ENCODE measurements at regions of chr19 and their contacts with region 1.

Region 1: GRCh38 chr19:45423589-45424190 is at the start of gene ERCC1:
- DNase-seq: peak; percentile 76 to 89
- ATAC-seq: peak; percentile 73 to 78
- H3K4me3 ChIP-seq: peak within 1 kb of the TSS; percentile 65 to 89 (median 78)
- H3K27ac ChIP-seq: peak within 1 kb of the TSS; percentile 86 to 96 (median 92)
- H3K4me1 ChIP-seq: peaks cover 25 to 31% of the 10 kb centered on the region in 2 donors
- H3K27me3 ChIP-seq: no peaks in the 10 kb centered on the region
- CTCF ChIP-seq: no peak
- POLR2A ChIP-seq: peak; percentile 63 to 76
- total RNA-seq, gene ERCC1: 92.1 to 185 (median 103) TPM

Region 2: GRCh38 chr19:45306518-45307027 is 117.1 kb before region 1 on chr19:
- in situ Hi-C with region 1: no loop called
- intact Hi-C with region 1: loop called (anchors 5 kb)
- DNase-seq: peak in 1 of 2 donors; percentile 70
- ATAC-seq: peak in 1 of 2 donors; percentile 8
- H3K4me3 ChIP-seq: no peak overlapping the region
- H3K27ac ChIP-seq: peak overlapping the region; percentile 76 to 100 (median 98)
- H3K4me1 ChIP-seq: peaks cover 20 to 21% of the 10 kb centered on the region in 2 donors
- H3K27me3 ChIP-seq: no peaks in the 10 kb centered on the region
- CTCF ChIP-seq: no peak
- POLR2A ChIP-seq: no peak

Region 3: DNA sequence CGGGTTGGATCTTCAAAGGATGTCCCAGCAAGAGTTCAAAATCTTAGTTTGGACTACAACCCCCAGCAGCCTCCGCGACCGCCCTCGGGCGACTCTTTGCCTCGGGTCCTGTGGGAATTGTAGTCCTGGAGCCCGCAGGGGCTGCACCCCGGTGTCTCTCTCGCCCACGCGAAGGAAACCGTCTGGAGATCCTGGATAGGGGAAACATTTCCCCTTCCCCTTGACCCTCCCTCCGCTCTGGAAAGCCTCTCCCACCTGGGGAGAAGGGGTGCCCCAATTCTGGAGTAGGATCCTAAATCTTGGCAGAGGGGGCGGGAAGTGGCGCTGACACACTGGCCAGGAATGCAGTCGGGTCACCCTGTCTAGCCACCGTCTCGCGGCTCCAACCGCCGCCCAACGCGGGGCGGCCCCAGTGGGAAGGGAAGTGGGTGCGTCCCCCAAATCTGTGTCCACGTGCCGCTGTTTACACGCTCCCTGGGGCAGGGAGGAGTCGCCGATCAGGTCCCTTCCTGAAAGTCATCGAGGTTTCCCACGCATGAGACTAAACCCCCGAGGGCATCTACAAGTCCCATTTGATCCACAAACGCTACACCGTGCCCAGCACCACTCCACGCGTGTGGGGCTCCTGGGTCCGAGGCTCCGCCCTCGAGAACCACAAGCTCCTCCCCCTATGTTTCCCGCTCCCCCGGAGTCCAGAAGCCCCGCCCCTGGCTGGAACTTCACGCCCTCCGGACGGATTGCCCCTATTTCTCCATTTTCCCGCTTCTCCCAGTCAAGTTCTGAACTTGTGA is 18.1 kb before region 1 on chr19:
- in situ Hi-C with region 1: no loop called
- intact Hi-C with region 1: loop called (anchors 2 kb)
- DNase-seq: peak; percentile 82 to 85
- ATAC-seq: peak; percentile 76 to 78
- H3K4me3 ChIP-seq: peak overlapping the region; percentile 58 to 94 (median 80)
- H3K27ac ChIP-seq: peak overlapping the region; percentile 88 to 96 (median 92)
- H3K4me1 ChIP-seq: peaks cover 22 to 23% of the 10 kb centered on the region in 2 donors
- H3K27me3 ChIP-seq: peaks cover 5 to 10% (median 9%) of the 10 kb centered on the region in 3 donors
- CTCF ChIP-seq: no peak
- POLR2A ChIP-seq: peak in 1 of 2 donors; percentile 22

Region 4: GRCh38 chr19:45439569-45440254 is 16.0 kb after region 1 on chr19:
- in situ Hi-C with region 1: no loop called
- intact Hi-C with region 1: loop called (anchors 2 kb)
- DNase-seq: peak; percentile 80 to 90
- ATAC-seq: peak; percentile 80
- H3K4me3 ChIP-seq: peak overlapping the region; percentile 58 to 91 (median 66)
- H3K27ac ChIP-seq: peak overlapping the region; percentile 89 to 98 (median 98)
- H3K4me1 ChIP-seq: peaks cover 11 to 22% of the 10 kb centered on the region in 2 donors
- H3K27me3 ChIP-seq: no peaks in the 10 kb centered on the region
- CTCF ChIP-seq: peak; percentile 98 to 100 (median 100)
- POLR2A ChIP-seq: peak; percentile 55 to 79

Region 5: GRCh38 chr19:45478454-45479238 is 55.0 kb after region 1 on chr19:
- in situ Hi-C with region 1: no loop called
- intact Hi-C with region 1: loop called (anchors 2 kb)
- DNase-seq: peak; percentile 62 to 82
- ATAC-seq: peak; percentile 87 to 91
- H3K4me3 ChIP-seq: peak overlapping the region; percentile 55 to 60 (median 56)
- H3K27ac ChIP-seq: peak overlapping the region; percentile 91 to 94 (median 91)
- H3K4me1 ChIP-seq: peaks cover 5 to 7% of the 10 kb centered on the region in 2 donors
- H3K27me3 ChIP-seq: no peaks in the 10 kb centered on the region
- CTCF ChIP-seq: peak; percentile 96 to 99 (median 99)
- POLR2A ChIP-seq: peak; percentile 55 to 71

Region 6: GRCh38 chr19:45558399-45558878 is 134.7 kb after region 1 on chr19:
- in situ Hi-C with region 1: no loop called
- intact Hi-C with region 1: no loop called
- DNase-seq: no peak
- ATAC-seq: peak; percentile 54 to 56
- H3K4me3 ChIP-seq: no peak overlapping the region
- H3K27ac ChIP-seq: no peak overlapping the region
- H3K4me1 ChIP-seq: peaks cover 0 to 12% of the 10 kb centered on the region in 2 donors
- H3K27me3 ChIP-seq: no peaks in the 10 kb centered on the region
- CTCF ChIP-seq: peak; percentile 17 to 53 (median 37)
- POLR2A ChIP-seq: no peak

Region 7: GRCh38 chr19:45584332-45585157 is 160.9 kb after region 1 on chr19 and contains the start of gene OPA3:
- in situ Hi-C with region 1: no loop called
- intact Hi-C with region 1: loop called (anchors 5 kb)
- DNase-seq: peak; percentile 99 to 100
- ATAC-seq: peak; percentile 94 to 96
- H3K4me3 ChIP-seq: peak within 1 kb of the TSS; percentile 68 to 93 (median 76)
- H3K27ac ChIP-seq: peak within 1 kb of the TSS; percentile 92 to 99 (median 97)
- H3K4me1 ChIP-seq: peaks cover 9 to 13% of the 10 kb centered on the region in 2 donors
- H3K27me3 ChIP-seq: no peaks in the 10 kb centered on the region
- CTCF ChIP-seq: peak in 1 of 5 experiments; percentile 26
- POLR2A ChIP-seq: peak; percentile 71 to 84
- total RNA-seq, gene OPA3: 14.8 to 32.5 (median 20.3) TPM

Region 8: DNA sequence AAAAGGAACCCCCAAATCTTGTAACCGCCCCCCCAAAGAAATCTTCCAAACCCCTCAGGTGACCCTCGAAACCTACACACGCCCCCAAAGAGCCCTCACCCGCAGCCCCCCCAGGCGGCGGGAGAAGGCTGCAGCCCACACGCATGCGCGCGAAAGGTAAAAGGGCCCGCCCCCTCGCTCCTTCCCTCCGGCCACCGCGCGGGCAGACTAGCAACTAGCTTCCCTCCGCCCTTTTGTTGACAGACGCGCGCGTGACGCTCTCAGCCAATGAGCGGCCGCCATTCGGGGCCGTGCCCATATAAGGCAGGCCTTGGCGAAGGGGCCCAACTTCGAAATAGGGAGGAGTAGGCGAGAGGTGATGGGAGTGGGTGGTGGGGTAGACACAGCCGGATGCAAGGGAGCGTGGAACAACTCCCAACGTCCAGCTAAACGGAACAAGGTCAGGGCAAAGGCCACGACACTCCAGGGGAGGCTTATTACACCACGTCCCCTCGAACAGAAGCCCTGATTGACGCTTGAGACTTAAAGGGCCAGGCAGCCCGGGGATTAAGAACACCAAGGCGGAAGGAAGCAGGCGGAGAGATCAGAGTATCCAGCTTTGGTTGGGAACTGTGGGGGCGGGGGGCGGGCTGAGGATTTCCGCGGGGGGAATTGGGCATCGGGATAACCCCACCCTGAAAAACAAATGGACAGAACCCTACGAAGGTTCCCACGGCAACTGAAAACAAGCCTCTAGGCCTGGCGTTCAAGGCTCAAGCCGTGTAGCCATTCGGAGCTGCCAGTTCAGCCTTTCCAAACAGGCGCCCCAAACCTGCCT is 293.7 kb after region 1 on chr19:
- in situ Hi-C with region 1: no loop called
- intact Hi-C with region 1: loop called (anchors 10 kb)
- DNase-seq: peak; percentile 99 to 100
- ATAC-seq: peak; percentile 96 to 98
- H3K4me3 ChIP-seq: peak overlapping the region; percentile 74 to 82 (median 76)
- H3K27ac ChIP-seq: peak overlapping the region; percentile 88 to 95 (median 92)
- H3K4me1 ChIP-seq: peaks cover 12 to 17% of the 10 kb centered on the region in 2 donors
- H3K27me3 ChIP-seq: no peaks in the 10 kb centered on the region
- CTCF ChIP-seq: peak in 3 of 5 experiments; percentile 26 to 42 (median 37)
- POLR2A ChIP-seq: peak; percentile 55 to 75

Measured in gastrocnemius medialis (tissue), 4 donors.